ENCODE measurements at regions of chr5 and their contacts with region 1.

Region 1: DNA sequence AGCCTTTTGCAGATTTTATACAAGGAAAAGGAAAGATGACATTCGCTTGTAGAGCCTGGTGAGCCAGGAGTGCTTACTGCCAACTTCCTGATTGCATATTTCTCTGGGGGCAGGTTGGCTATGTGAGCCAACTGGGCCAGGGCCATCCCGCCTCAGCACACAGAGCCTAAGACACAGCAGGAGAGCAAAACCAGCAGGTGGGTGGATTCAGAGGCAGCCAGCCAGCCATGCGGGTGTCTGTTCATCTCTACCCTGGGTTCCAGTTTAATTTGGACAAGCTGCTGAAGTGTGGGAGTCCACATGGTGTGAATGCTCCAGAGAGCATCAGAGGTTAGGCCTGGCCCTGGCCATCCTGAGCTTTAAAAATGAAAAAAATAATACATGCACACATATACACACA is 291.4 kb downstream of the ARHGEF28 start:
- DNase-seq: peak; percentile 72
- H3K4me3 ChIP-seq: no peak overlapping the region
- CTCF ChIP-seq: no peak

Region 2: DNA sequence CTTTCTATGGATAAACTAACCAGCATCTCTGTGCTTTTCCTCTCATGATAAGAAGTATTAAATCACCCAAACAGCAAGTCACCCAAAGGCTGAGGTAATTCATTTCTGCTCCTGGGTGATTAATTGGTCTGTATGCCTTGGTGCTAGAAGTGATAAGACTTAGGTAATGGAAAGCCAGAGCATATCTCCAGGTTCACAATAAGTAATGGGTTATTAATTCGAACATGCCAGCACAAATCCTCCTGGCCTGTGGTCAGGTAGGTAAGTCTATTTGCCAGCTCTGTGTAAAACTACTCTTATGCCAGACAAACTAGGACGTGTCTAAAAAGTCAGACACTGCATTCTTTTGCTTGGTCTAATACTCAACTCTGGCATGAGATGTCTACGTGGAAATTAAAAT is 734.3 kb after region 1 on chr5:
- in situ Hi-C with region 1: loop called (anchors 10 kb)
- DNase-seq: no peak
- H3K4me3 ChIP-seq: no peak overlapping the region
- CTCF ChIP-seq: no peak

Region 3: GRCh38 chr5:75002271-75002670 is 1084.8 kb after region 1 on chr5:
- in situ Hi-C with region 1: no loop called
- DNase-seq: no peak
- H3K4me3 ChIP-seq: no peak overlapping the region
- CTCF ChIP-seq: no peak

Measured in astrocyte of the cerebellum (primary cell).